Lower lobe of right lung (tissue), 2 donors: ENCODE measurements at regions of chr4 and their contacts with region 1.

Region 1: DNA sequence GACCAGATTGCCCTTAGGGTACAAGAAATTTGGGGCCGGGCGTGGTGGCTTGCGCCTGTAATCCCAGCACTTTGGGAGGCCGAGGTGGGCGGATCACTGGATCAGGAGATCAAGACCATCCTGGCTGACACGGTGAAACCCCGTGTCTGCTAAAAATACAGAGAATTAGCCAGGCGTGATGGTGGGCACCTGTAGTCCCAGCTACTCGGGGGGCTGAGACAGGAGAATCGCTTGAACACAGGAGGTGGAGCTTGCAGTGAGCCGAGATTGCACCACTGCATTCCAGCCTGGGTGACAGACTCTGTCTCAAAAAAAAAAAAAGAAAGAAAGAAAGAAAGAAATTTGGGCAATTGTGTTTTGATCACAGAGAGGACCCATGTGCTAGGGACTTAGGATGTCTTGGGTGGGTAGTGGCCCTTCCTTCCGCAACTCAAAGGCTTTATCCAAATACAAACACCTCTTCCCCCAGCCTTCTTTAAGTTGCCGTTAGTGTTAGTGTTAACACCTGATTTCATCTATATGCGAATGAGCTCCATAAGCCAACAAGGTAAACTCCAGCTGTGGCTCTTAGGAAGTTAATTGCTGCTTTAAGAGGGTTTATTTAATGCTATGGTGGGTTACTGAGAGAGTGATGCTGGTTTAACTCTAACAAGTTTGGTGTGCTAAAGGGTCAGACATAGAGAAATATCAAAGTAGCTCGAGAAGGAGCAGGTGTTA is 8.6 kb upstream of the CCDC110 start:
- DNase-seq: no peak
- ATAC-seq: peak in 1 of 2 donors; percentile 57
- H3K4me3 ChIP-seq: no peak overlapping the region
- H3K27ac ChIP-seq: no peak overlapping the region
- H3K4me1 ChIP-seq: no peaks in the 10 kb centered on the region
- H3K27me3 ChIP-seq: no peaks in the 10 kb centered on the region
- CTCF ChIP-seq: no peak

Region 2: DNA sequence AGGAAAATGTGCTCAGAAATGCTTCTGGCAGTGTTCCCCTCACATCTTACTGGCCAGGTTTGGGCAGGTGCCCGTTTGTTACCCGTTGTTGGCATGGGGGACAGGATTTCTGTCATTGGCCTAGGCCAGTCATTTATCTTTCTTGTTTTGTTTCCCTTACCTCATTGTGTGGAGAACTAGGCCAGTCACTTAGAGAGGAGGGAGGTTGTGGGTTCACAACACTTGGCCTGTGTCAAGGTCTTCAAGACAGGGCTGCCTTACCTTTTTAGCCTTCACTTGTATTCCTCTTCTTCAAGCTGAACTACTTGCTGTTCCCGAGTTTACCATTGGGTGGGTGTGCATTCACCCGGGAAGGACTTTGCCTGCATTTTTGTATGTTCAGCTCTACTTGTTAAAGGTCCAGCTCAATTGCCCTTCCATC is 253.0 kb before region 1 on chr4:
- intact Hi-C with region 1: no loop called
- DNase-seq: no peak
- ATAC-seq: no peak
- H3K4me3 ChIP-seq: no peak overlapping the region
- H3K27ac ChIP-seq: no peak overlapping the region
- H3K4me1 ChIP-seq: peaks cover 5% of the 10 kb centered on the region
- H3K27me3 ChIP-seq: no peaks in the 10 kb centered on the region
- CTCF ChIP-seq: no peak

Region 3: GRCh38 chr4:185426960-185427688 is 53.0 kb before region 1 on chr4:
- intact Hi-C with region 1: no loop called
- DNase-seq: no peak
- ATAC-seq: no peak
- H3K4me3 ChIP-seq: no peak overlapping the region
- H3K27ac ChIP-seq: no peak overlapping the region
- H3K4me1 ChIP-seq: peaks cover 24% of the 10 kb centered on the region
- H3K27me3 ChIP-seq: no peaks in the 10 kb centered on the region
- CTCF ChIP-seq: no peak

Region 4: DNA sequence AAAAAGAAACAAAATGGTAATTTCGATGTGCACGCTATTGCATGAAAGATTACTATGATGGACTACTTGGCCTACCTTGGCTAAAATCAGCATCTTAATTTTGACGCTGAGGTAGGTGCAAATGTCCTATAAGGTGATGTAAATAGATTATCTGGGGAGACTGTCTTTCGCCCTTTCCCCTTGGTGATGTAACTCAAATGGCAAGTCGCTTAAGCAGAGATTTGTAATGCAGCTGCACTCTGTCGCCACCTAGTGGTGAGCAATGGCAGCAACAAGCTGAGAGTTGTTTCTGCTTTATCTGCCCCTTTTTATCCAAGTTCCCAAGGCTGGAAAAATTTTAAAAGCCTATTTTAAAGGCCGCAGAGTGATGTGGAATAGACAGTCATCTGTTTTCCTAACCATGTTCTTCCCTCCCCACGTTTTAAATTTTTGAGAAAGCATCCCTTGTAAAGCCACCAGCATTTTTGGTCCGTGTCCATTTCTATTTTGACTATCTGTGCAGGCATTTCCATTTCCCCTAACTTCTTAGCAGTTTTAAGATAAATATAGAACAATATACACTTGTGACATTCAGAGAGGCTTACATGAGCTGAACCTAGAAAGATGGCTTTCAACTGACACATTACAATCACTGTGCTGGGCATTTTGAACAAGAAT is 117.5 kb after region 1 on chr4:
- intact Hi-C with region 1: loop called (anchors 10 kb)
- DNase-seq: peak; percentile 71
- ATAC-seq: peak; percentile 87 to 88
- H3K4me3 ChIP-seq: no peak overlapping the region
- H3K27ac ChIP-seq: no peak overlapping the region
- H3K4me1 ChIP-seq: no peaks in the 10 kb centered on the region
- H3K27me3 ChIP-seq: no peaks in the 10 kb centered on the region
- CTCF ChIP-seq: peak; percentile 98